ENCODE measurements at regions of chr14 and their contacts with region 1.

Region 1: GRCh38 chr14:32469388-32470160 is 140.5 kb downstream of the AKAP6 start:
- DNase-seq: peak in 1 of 2 experiments; percentile 48
- H3K4me3 ChIP-seq: no peak overlapping the region
- H3K27ac ChIP-seq: peak overlapping the region; percentile 71
- H3K4me1 ChIP-seq: peaks cover 46% of the 10 kb centered on the region
- H3K27me3 ChIP-seq: no peaks in the 10 kb centered on the region
- CTCF ChIP-seq: peak; percentile 74

Region 2: DNA sequence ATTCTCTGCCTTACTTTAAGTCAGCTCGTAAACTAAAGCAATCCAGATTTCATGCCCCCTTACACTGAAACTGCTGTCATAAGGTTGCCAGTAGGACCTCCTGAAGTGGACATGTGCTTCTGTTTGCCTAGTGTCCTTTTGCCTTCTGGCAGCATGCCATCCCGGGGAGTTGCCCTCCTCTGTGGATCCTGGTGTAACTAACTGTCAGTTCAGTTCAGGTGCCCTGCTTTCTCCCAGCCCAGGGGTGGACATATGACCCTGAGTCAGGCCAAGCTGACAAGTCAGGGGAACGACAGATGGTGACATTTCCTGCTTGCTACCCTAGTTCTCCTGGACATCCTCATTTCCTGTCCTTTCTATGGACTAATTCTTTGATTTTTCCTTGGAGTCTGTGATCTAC is 114.9 kb before region 1 on chr14:
- CTCF ChIA-PET with region 1: no interaction called
- POLR2A ChIA-PET with region 1: no interaction called
- intact Hi-C with region 1: no loop called
- DNase-seq: peak in 1 of 2 experiments; percentile 4
- H3K4me3 ChIP-seq: no peak overlapping the region
- H3K27ac ChIP-seq: no peak overlapping the region
- H3K4me1 ChIP-seq: no peaks in the 10 kb centered on the region
- H3K27me3 ChIP-seq: no peaks in the 10 kb centered on the region
- CTCF ChIP-seq: no peak

Region 3: DNA sequence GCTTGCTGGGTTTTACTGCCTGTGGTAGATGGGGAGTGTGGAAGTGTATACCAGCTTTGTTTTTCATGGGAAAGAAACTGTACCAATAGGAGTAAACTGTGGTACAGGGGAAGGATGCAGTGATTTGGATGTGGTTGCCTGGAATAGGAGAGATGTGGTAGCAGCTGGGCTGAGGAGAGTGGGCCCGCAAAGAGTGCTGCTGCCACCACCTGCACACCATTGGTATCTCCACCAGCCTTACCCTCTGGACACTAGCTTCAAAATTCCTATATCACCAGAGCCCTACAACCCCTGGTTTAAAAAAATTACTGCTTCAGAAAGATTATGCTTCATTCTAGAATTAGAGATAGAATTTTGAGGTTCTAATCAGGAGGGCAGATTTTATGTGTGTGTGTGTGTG is 86.9 kb before region 1 on chr14:
- CTCF ChIA-PET with region 1: no interaction called
- POLR2A ChIA-PET with region 1: no interaction called
- intact Hi-C with region 1: loop called (anchors 5 kb)
- DNase-seq: peak; percentile 30 to 34
- H3K4me3 ChIP-seq: no peak overlapping the region
- H3K27ac ChIP-seq: no peak overlapping the region
- H3K4me1 ChIP-seq: peaks cover 13% of the 10 kb centered on the region; the same call in 1 of the 2 replicates
- H3K27me3 ChIP-seq: no peaks in the 10 kb centered on the region
- CTCF ChIP-seq: peak; percentile 60

Region 4: DNA sequence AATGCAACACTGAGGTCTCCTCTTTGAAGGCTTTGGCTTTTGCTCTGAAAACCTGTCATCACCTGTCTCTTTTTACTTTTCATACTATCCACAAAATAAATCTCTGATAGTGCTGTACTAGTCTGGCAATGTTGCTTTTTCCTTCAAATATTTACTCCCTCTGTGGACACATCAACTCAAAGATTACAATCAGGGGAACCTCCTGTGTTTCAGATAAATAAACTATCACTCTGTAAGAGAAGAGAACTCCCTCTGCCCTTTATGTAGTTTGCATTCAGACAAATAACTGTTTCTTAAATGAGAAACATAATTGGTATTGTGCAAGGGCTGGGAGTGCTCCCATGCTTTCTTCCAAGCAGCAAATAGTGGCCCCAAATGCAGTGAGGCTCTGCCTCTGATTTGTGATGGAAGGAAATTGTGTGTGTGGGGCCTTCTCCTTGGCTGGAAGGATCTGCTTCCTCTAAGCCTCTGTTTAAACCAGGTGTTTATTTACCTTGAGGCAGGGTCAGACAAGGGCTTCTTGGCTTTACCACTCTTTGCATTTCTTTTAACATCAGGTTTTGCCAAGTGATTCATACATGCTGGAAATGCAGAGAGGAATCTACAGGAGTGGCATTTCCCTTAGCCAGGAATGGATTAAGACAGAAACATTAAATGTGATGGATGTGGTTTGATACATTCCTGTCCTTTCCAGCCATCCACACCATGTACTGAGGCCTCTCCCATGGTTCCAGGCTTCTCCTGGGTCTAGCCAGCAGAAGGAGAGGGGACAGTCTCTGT is 71.5 kb before region 1 on chr14:
- CTCF ChIA-PET with region 1: no interaction called
- POLR2A ChIA-PET with region 1: no interaction called
- intact Hi-C with region 1: loop called (anchors 5 kb)
- DNase-seq: peak; percentile 38 to 84
- H3K4me3 ChIP-seq: no peak overlapping the region
- H3K27ac ChIP-seq: peak overlapping the region; percentile 30
- H3K4me1 ChIP-seq: peaks cover 14% of the 10 kb centered on the region
- H3K27me3 ChIP-seq: no peaks in the 10 kb centered on the region
- CTCF ChIP-seq: no peak

Region 5: DNA sequence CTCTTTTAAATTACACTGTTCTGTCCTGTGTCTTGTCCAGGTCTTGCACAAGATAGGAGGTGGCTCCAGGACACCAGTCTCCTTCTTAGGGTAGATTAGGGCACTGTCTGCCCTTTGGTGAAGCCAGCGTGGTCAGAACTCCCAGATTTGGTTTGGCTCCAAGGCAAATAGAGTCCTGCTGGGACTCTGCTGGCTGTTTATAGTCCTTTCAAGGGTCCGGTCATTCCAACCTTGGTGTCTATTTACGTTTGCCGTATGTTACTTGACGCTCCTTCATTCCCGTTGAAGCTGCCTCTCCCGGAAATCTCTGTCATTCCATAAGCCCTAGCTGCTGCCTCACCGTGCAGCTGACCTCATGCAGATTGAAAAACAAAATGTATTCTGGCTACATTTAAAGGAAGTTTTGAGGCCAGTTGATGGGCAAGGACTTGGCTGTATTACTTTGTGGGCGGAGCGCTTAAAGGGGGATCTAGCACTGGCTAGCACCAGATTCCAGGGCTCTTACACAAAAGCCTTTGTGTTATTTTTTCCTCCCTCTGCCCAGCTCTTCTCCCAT is 40.1 kb after region 1 on chr14:
- CTCF ChIA-PET with region 1: interaction called, 3 read pairs
- POLR2A ChIA-PET with region 1: no interaction called
- intact Hi-C with region 1: loop called (anchors 1 kb)
- DNase-seq: peak in 1 of 2 experiments; percentile 50
- H3K4me3 ChIP-seq: no peak overlapping the region
- H3K27ac ChIP-seq: no peak overlapping the region
- H3K4me1 ChIP-seq: peaks cover 41% of the 10 kb centered on the region
- H3K27me3 ChIP-seq: no peaks in the 10 kb centered on the region
- CTCF ChIP-seq: no peak

Region 6: DNA sequence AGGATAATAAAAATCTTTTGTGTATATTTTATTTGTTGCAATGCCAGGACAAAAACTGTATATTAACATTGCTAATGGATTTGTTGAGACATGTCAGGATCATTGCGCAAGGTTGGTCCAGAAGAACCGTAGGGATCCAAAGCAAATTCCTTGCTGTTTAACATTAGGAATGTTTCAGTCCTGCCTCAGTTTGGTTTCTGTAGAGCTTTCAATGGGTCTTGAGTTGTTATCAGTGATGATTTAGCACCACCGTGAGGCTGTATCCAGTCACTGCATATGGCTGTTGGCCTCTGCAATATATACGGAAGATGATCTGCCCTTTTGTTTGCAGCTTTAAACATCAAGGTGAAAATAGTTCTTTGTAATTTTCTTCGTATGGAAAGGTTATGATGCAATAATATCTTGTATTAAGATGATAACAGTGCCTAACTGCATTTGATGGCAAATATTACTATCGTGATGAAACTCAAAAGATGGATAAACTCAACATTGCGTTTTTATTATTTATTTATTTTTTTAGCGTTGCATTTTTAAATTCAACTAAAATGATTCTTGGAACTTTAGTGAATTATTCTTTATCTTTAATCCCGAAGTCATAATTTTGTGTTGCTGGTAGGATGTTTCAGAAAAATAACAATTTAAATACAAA is 90.8 kb after region 1 on chr14:
- CTCF ChIA-PET with region 1: no interaction called
- POLR2A ChIA-PET with region 1: no interaction called
- intact Hi-C with region 1: loop called (anchors 2 kb)
- DNase-seq: peak; percentile 45 to 47
- H3K4me3 ChIP-seq: no peak overlapping the region
- H3K27ac ChIP-seq: no peak overlapping the region
- H3K4me1 ChIP-seq: no peaks in the 10 kb centered on the region
- H3K27me3 ChIP-seq: no peaks in the 10 kb centered on the region
- CTCF ChIP-seq: peak; percentile 90

Region 7: GRCh38 chr14:34322940-34323418 is 1853.4 kb after region 1 on chr14:
- CTCF ChIA-PET with region 1: no interaction called
- POLR2A ChIA-PET with region 1: no interaction called
- intact Hi-C with region 1: loop called (anchors 5 kb)
- DNase-seq: peak in 1 of 2 experiments; percentile 38
- H3K4me3 ChIP-seq: no peak overlapping the region
- H3K27ac ChIP-seq: no peak overlapping the region
- H3K4me1 ChIP-seq: no peaks in the 10 kb centered on the region
- H3K27me3 ChIP-seq: no peaks in the 10 kb centered on the region
- CTCF ChIP-seq: peak; percentile 82

Measured in PC-9 (cell line).